CD4-positive, alpha-beta T cell (primary cell): ENCODE measurements at regions of chr6 and their contacts with region 1.

Region 1: GRCh38 chr6:109095027-109095834 is at the start of gene CEP57L1:
- DNase-seq: peak; percentile 89 to 98 (median 92)
- ATAC-seq: peak; percentile 81
- H3K4me3 ChIP-seq: peak within 1 kb of the TSS; percentile 80
- H3K4me3 Mint-ChIP-seq: peak within 1 kb of the TSS; percentile 96
- H3K27ac ChIP-seq: peak within 1 kb of the TSS; percentile 95 to 98
- H3K27ac Mint-ChIP-seq: peak within 1 kb of the TSS; percentile 98
- H3K4me1 ChIP-seq: peaks cover 15% of the 10 kb centered on the region
- H3K4me1 Mint-ChIP-seq: peaks cover 56% of the 10 kb centered on the region
- H3K27me3 ChIP-seq: no peaks in the 10 kb centered on the region
- H3K27me3 Mint-ChIP-seq: no peaks in the 10 kb centered on the region
- CTCF ChIP-seq: no peak
- total RNA-seq, gene CEP57L1: 3.8 to 4.8 TPM

Region 2: GRCh38 chr6:107459283-107460082 is 1635.7 kb before region 1 on chr6 and contains the start of gene PDSS2:
- CTCF ChIA-PET with region 1: no interaction called
- POLR2A ChIA-PET with region 1: no interaction called
- intact Hi-C with region 1: loop called in 1 of 2 experiments (anchors 10 kb)
- DNase-seq: peak; percentile 89 to 98 (median 96)
- ATAC-seq: peak; percentile 96
- H3K4me3 ChIP-seq: peak within 1 kb of the TSS; percentile 91
- H3K4me3 Mint-ChIP-seq: peak within 1 kb of the TSS; percentile 94
- H3K27ac ChIP-seq: peak within 1 kb of the TSS; percentile 71 to 79
- H3K27ac Mint-ChIP-seq: peak within 1 kb of the TSS; percentile 97
- H3K4me1 ChIP-seq: peaks cover 16% of the 10 kb centered on the region
- H3K4me1 Mint-ChIP-seq: peaks cover 23% of the 10 kb centered on the region
- H3K27me3 ChIP-seq: no peaks in the 10 kb centered on the region
- H3K27me3 Mint-ChIP-seq: no peaks in the 10 kb centered on the region
- CTCF ChIP-seq: no peak
- total RNA-seq, gene PDSS2: 5.8 to 6.6 TPM

Region 3: DNA sequence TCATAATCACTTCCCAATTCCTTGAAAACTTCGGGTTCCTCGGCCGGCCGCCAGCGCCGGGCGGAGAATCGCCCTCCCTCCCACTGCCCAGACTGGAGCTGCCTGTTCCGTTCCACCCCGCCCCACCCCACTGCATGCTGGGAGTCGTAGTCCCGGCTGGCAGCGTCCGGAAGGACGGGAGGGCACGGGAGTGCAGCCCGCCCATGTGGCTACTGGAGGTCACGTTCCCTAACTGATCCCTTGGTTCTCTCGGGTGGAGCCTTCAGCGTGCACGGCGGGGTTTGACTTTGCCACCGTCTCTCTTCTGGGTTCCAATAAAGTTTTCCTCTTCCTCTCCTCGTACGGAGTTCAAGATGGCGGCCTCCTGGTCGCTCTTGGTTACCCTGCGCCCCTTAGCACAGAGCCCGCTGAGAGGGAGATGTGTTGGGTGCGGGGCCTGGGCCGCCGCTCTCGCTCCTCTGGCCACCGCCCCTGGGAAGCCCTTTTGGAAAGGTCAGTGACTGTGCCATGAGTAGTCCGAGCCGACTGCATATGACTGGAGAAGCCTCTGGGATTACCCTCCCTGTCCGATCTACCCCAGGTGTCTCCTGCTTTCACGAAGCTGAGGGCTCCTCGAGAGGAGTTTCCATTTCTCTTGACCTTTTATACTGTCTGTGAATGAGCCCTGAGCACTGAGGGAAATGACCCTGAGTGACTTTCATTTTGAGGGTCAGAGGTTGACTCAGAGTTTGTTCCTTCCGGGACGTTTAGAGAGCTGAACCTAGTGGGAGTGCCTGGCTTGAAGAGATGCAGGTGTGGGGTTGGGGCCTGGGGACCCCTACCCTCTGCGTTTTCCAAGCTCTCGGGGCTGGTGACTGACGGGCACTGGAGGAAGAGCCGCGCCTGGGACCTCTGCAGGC is 800.3 kb before region 1 on chr6 and contains the start of gene AFG1L:
- CTCF ChIA-PET with region 1: no interaction called
- POLR2A ChIA-PET with region 1: no interaction called
- intact Hi-C with region 1: loop called in 1 of 2 experiments (anchors 10 kb)
- DNase-seq: peak; percentile 77 to 90 (median 83)
- ATAC-seq: peak; percentile 89
- H3K4me3 ChIP-seq: peak within 1 kb of the TSS; percentile 91
- H3K4me3 Mint-ChIP-seq: peak within 1 kb of the TSS; percentile 97
- H3K27ac ChIP-seq: peak within 1 kb of the TSS; percentile 93 to 95
- H3K27ac Mint-ChIP-seq: peak within 1 kb of the TSS; percentile 96
- H3K4me1 ChIP-seq: peaks cover 17% of the 10 kb centered on the region
- H3K4me1 Mint-ChIP-seq: peaks cover 30% of the 10 kb centered on the region
- H3K27me3 ChIP-seq: no peaks in the 10 kb centered on the region
- H3K27me3 Mint-ChIP-seq: no peaks in the 10 kb centered on the region
- CTCF ChIP-seq: no peak
- total RNA-seq, gene AFG1L: 3.0 to 3.9 TPM

Region 4: GRCh38 chr6:109009236-109009961 is 85.8 kb before region 1 on chr6:
- CTCF ChIA-PET with region 1: no interaction called
- POLR2A ChIA-PET with region 1: interaction called, 30 read pairs
- intact Hi-C with region 1: loop called in 1 of 2 experiments (anchors 2 kb)
- DNase-seq: peak; percentile 81 to 97 (median 90)
- ATAC-seq: peak; percentile 94
- H3K4me3 ChIP-seq: peak overlapping the region; percentile 93
- H3K4me3 Mint-ChIP-seq: peak overlapping the region; percentile 100
- H3K27ac ChIP-seq: peak overlapping the region; percentile 84 to 92
- H3K27ac Mint-ChIP-seq: peak overlapping the region; percentile 99
- H3K4me1 ChIP-seq: peaks cover 18% of the 10 kb centered on the region
- H3K4me1 Mint-ChIP-seq: peaks cover 73% of the 10 kb centered on the region
- H3K27me3 ChIP-seq: no peaks in the 10 kb centered on the region
- H3K27me3 Mint-ChIP-seq: no peaks in the 10 kb centered on the region
- CTCF ChIP-seq: peak; percentile 14

Region 5: DNA sequence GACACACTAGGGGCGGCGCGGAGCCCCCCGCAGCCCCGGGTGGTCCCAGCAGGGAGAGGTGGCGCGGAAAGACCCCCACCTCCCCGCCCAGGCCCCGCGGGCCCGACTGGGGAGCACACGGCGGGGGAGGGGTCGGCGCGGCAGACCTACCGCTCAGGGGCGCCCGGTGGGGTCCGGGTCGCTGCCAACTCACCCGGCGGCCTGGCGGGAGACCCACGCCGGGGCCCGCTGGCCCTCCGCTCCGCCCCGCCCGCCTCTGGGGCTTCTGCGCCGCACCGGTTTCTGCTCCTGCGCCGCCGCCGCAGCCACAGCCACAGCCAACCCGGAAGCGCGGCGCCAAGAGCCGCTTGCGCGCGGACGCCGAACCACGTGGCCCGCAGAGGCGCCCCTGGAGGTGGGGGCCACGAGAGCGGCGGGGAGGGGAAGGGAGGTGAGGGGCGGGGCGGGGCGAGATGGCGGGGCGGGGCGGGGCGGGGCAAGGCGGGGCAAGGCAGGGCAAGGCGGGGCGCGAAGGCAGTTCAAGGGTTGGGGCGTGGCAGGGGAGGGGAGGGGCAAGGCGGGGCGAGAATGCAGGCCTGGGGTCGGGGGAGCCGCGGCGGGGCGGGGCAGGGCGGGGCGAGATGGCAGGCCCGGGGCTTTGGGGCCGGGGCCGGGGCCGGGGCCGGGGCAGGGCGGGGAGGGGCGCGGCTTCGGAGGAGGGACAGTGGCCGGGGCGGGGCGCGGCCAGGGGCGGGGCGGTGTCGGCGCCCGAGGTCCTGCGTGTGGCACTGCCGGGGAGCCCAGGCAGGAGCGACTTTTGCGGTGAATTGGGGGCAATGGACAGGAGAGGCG is 387.9 kb after region 1 on chr6 and contains the start of gene ZBTB24:
- CTCF ChIA-PET with region 1: no interaction called
- POLR2A ChIA-PET with region 1: interaction called, 3 read pairs
- intact Hi-C with region 1: loop called in 1 of 2 experiments (anchors 10 kb)
- DNase-seq: peak; percentile 78 to 97 (median 88)
- ATAC-seq: peak; percentile 87
- H3K4me3 ChIP-seq: peak within 1 kb of the TSS; percentile 85
- H3K4me3 Mint-ChIP-seq: peak within 1 kb of the TSS; percentile 96
- H3K27ac ChIP-seq: peak within 1 kb of the TSS; percentile 68 to 77
- H3K27ac Mint-ChIP-seq: peak within 1 kb of the TSS; percentile 79
- H3K4me1 ChIP-seq: peaks cover 36% of the 10 kb centered on the region
- H3K4me1 Mint-ChIP-seq: peaks cover 55% of the 10 kb centered on the region
- H3K27me3 ChIP-seq: no peaks in the 10 kb centered on the region
- H3K27me3 Mint-ChIP-seq: no peaks in the 10 kb centered on the region
- CTCF ChIP-seq: no peak
- total RNA-seq, gene ZBTB24: 10.4 to 10.5 TPM

Region 6: GRCh38 chr6:110815217-110816109 is 1720.2 kb after region 1 on chr6 and contains the start of gene CDK19:
- CTCF ChIA-PET with region 1: no interaction called
- POLR2A ChIA-PET with region 1: interaction called, 5 read pairs
- intact Hi-C with region 1: loop called in 1 of 2 experiments (anchors 5 kb)
- DNase-seq: peak; percentile 97 to 100 (median 98)
- ATAC-seq: peak; percentile 82
- H3K4me3 ChIP-seq: peak within 1 kb of the TSS; percentile 88
- H3K4me3 Mint-ChIP-seq: peak within 1 kb of the TSS; percentile 99
- H3K27ac ChIP-seq: peak within 1 kb of the TSS; percentile 82 to 93
- H3K27ac Mint-ChIP-seq: peak within 1 kb of the TSS; percentile 99
- H3K4me1 ChIP-seq: peaks cover 16% of the 10 kb centered on the region
- H3K4me1 Mint-ChIP-seq: peaks cover 33% of the 10 kb centered on the region
- H3K27me3 ChIP-seq: no peaks in the 10 kb centered on the region
- H3K27me3 Mint-ChIP-seq: no peaks in the 10 kb centered on the region
- CTCF ChIP-seq: no peak
- total RNA-seq, gene CDK19: 6.4 to 8.3 TPM